Right ventricle myocardium superior (tissue), 1 donor: ENCODE measurements at regions of chr3 and their contacts with region 1.

Region 1: GRCh38 chr3:132722164-132723024 is at the start of gene NPHP3:
- DNase-seq: peak; percentile 97
- ATAC-seq: peak; percentile 92
- total RNA-seq, gene NPHP3: 9.3 TPM

Region 2: DNA sequence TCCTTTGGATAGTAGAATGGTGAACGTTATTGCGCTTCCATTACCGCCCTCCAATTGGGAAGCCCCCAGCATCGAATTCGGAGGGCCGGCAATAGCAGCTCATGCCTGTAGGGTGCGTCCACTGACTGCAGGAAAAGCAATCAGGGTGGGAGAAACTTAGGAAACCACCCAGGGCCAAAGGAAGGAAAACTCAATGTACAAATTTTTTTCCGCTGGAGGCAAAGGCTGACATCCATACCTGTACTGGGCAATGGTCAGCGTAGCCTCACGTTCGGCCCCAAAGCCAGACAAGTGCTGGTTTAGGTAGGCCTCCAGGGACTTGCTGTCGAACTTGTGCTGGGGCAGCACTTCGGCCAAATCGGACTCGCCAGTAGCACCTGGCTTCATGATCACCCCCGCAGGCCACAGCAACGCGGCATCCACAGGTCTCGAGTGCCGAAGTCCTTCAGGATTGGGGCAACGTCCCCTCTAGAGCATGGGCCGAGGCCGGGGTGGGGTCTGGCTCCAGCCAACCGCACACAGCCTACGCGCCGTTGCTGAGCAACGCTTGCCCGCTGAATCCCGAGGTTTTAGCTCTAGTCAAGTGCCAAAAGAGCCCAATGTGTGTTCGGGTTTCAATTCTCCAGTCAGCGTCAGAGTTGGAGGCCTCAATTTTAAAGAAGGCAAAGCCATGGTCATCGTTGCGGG is 62.9 kb before region 1 on chr3 and contains the start of gene ACAD11:
- intact Hi-C with region 1: no loop called
- DNase-seq: peak; percentile 85
- ATAC-seq: peak; percentile 83
- total RNA-seq, gene ACAD11: 14.7 TPM

Region 3: DNA sequence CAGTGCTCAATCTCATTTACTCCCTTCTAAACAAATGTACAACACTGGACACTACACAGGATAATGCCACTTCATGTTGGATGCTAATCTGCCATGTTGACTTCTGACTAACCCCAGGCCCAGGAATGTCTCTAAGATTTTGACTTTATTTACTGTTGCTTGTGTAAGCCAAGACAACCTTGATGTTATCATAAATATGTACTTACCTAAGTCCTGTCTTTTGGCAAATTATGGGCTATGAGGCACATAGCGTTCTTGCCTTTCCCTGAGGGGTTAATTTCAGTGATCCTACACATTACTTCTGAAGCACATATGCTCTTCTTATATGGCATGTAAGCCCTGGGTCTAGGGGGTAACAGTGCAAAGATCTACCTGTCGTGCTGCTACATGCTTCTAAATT is 136.2 kb after region 1 on chr3:
- intact Hi-C with region 1: no loop called
- DNase-seq: no peak
- ATAC-seq: no peak

Region 4: DNA sequence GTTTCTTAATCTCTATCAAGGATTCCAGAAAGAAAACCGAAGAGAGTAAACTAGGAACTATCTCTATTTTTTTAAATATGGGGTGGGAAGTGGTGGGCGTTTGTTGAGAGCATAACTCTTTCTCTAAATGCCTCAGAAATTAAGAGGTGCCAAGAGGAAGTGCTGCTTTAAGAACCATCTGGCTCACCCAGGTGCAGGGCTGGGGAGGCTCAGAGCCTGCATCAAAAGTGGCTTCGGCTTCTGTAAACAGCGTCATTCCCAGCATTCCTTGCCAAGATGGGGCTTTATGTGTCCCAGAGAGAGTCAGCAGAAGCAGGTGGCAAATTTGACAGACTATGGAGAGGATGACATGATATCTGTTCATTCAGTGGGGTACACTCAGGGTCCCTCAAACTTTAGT is 554.2 kb after region 1 on chr3:
- intact Hi-C with region 1: no loop called
- DNase-seq: no peak
- ATAC-seq: no peak

Region 5: DNA sequence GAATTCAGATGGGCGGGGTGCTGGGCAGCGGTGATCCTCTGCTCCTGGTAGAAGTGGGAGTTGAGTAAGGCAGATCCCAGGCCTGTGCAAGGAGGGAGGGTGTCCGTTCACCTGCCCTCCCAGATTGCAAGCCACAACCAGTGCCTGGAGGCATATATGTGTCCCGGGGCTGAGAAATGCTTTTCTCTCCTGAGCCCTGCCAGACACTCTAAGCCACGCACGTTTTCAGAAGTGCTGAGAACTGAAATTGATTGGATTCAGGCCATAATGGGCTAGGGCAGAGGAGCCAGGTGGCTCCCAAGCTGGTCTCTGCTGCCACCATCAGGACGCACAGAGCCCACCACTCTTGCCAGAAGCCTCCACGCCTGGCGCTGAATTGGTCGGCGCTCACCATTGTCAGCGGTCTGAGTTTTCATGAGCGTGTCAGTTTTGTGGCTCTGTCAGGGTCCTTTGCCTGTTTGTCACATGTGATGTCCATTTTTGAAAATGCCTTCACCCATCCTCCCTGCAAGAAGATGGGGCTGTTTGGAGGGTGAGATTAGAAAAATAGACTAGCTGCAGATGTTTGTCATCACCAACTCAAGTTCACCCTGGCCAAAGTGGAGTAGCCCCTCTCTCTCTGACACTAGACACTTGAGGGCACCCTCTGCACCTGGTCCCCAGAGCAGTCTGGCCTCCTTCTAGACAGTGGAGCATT is 662.1 kb after region 1 on chr3:
- intact Hi-C with region 1: loop called (anchors 5 kb)
- DNase-seq: peak; percentile 63
- ATAC-seq: peak; percentile 92

Region 6: GRCh38 chr3:133588784-133589465 is 866.5 kb after region 1 on chr3:
- intact Hi-C with region 1: loop called (anchors 10 kb)
- DNase-seq: no peak
- ATAC-seq: no peak